Left cardiac atrium (tissue), 4 donors: ENCODE measurements at regions of chr2 and their contacts with region 1.

Region 1: GRCh38 chr2:29014811-29015421 is 33.8 kb downstream of the TOGARAM2 start:
- DNase-seq: peak; percentile 74
- ATAC-seq: peak; percentile 31 to 50

Region 2: GRCh38 chr2:28721601-28722191 is 293.2 kb before region 1 on chr2:
- intact Hi-C with region 1: no loop called
- DNase-seq: no peak
- ATAC-seq: no peak

Region 3: DNA sequence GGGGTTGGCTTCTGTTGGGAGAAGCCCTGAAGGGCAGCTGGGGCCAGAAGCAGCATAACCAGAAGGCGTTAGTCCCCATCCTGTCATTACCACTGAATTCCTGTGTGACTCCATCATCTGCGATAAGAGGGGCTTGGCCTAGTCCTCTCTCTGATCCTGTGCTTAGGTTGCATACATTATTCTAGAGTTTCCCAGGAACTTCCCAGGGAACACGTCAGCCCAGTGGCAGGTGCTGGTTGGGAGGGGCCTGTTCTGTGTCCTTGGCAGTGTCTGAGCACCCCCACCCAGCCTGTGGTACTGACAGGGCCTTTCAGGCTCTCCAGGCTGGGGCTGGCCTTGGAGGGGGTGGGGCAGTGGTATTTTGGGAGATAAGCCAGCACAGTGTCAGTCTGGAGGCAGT is 38.3 kb before region 1 on chr2:
- intact Hi-C with region 1: loop called in 1 of 2 experiments (anchors 5 kb)
- DNase-seq: peak; percentile 61
- ATAC-seq: peak; percentile 71 to 88

Region 4: GRCh38 chr2:29115797-29116781 is 101.2 kb after region 1 on chr2:
- intact Hi-C with region 1: loop called in 1 of 2 experiments (anchors 10 kb)
- DNase-seq: peak; percentile 76
- ATAC-seq: peak; percentile 29 to 35